ENCODE measurements at regions of chr7 and their contacts with region 1.

Region 1: DNA sequence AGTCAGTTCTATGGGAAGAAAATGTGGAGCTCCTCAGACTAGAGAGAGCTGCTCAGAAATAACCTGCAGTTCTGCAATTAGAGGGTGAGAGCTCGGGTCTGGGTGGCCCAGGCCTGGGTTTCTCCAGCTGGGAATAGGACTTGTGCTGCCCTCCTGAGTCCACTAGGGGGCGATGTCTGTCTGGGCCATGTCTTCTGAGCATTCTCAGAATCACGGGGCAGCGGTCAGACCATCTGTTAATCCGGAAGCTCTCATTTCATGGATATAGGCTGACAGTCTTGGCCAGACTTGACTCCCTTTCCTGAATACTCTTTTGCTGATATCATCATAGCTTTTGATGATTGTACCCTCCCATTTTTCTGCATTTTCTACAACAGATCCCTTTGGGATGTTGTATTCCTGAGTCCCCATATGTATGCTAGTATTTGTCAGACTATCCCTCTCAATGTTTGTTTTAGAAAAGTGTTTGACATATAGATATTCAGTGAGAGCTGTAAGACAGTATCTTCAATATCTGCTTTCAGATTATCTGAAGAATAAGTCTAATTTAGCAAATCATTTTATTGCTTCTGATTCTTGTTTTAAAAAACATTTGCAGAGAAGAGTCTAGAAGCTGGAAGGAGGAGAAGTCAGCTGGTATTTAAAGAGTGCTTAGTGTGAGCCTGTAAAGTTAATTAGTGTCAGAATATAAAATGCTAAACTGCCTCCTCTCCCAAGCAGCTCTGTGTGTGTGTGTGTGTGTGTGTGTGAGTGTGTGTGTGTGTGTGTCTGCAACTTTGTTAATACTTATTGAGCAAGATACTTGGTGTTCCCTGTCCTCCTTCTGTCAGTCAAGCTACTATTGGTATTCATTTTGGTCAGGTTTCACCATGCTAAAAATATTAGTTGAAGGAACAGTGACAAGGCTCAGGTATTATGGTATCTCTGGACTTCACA is 38.0 kb downstream of the STARD3NL start:
- H3K4me3 ChIP-seq: no peak overlapping the region
- H3K27ac ChIP-seq: no peak overlapping the region
- H3K4me1 ChIP-seq: peaks cover 2% of the 10 kb centered on the region; the same call in 1 of the 2 replicates
- CTCF ChIP-seq: peak; percentile 61

Region 2: GRCh38 chr7:38107486-38107893 is 108.5 kb before region 1 on chr7:
- CTCF ChIA-PET with region 1: interaction called, 53 read pairs
- POLR2A ChIA-PET with region 1: no interaction called
- H3K4me3 ChIP-seq: no peak overlapping the region
- H3K27ac ChIP-seq: no peak overlapping the region
- H3K4me1 ChIP-seq: no peaks in the 10 kb centered on the region
- CTCF ChIP-seq: no peak

Region 3: GRCh38 chr7:38178004-38178694 is 37.9 kb before region 1 on chr7 and contains the start of gene STARD3NL:
- CTCF ChIA-PET with region 1: interaction called, 23 read pairs
- POLR2A ChIA-PET with region 1: interaction called, 4 read pairs
- H3K4me3 ChIP-seq: peak within 1 kb of the TSS; percentile 78
- H3K27ac ChIP-seq: peak within 1 kb of the TSS; percentile 7; the same call in 1 of the 2 replicates
- H3K4me1 ChIP-seq: peaks cover 5% of the 10 kb centered on the region; the same call in 1 of the 2 replicates
- CTCF ChIP-seq: no peak; the same call in 1 of the 2 replicates

Region 4: DNA sequence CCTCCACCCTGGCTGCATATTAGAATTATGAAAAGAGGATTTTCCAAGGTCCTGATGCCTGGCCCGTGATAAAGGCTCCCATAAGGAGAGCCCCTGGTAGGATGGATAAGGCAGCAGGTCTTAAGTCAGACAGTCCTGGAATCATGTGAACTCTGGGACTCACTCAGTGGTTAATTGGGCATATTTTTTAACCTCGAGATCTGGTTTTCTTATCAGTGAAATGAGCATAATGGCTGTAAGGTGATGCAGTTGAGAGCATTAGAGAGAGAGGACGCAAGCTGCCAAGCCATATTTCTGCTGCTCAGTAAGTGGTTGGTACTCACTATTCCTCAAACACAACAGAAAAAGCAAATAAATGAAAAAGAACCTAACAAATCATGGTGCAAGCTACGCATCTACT is 19.6 kb after region 1 on chr7:
- CTCF ChIA-PET with region 1: interaction called, 10 read pairs
- POLR2A ChIA-PET with region 1: no interaction called
- H3K4me3 ChIP-seq: no peak overlapping the region
- H3K27ac ChIP-seq: no peak overlapping the region
- H3K4me1 ChIP-seq: no peaks in the 10 kb centered on the region
- CTCF ChIP-seq: no peak

Region 5: GRCh38 chr7:38318803-38319416 is 102.9 kb after region 1 on chr7:
- CTCF ChIA-PET with region 1: interaction called, 112 read pairs
- POLR2A ChIA-PET with region 1: no interaction called
- H3K4me3 ChIP-seq: no peak overlapping the region
- H3K27ac ChIP-seq: no peak overlapping the region
- H3K4me1 ChIP-seq: no peaks in the 10 kb centered on the region; the same call in 1 of the 2 replicates
- CTCF ChIP-seq: peak; percentile 75

Region 6: DNA sequence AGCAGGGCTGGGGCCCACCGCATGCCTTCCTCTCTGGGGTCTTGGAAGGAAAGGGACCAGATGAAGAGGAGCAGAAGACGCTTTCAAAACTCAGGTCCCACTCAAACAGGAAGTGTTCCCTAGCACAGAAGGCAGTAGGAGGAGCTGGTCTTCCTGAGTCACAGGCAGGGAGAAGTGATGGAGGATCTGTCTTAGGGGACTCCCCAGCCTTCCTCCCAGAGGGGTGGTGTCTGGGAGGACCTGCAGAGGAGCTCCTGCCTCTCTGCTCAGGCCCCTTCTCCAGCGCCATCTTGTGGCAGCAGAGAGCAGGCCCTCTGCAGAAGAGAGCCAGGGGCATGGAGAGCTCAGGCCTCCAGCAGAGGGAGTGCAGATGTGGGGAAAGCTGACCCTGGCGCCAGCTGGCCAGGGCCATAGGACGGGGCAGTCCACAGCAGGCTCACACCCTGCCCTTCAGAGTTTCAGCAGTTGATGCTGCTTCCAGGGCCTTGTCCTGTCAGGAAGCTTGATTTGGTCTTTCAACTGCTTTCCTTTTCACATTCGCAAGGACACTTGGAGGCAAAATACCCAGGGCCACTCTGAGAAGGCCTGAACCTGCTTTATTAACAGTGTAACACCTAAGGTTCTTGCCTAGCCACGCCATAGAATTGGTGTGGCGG is 119.6 kb after region 1 on chr7:
- CTCF ChIA-PET with region 1: interaction called, 87 read pairs
- POLR2A ChIA-PET with region 1: interaction called, 3 read pairs
- H3K4me3 ChIP-seq: no peak overlapping the region
- H3K27ac ChIP-seq: no peak overlapping the region
- H3K4me1 ChIP-seq: no peaks in the 10 kb centered on the region
- CTCF ChIP-seq: peak; percentile 77

Region 7: DNA sequence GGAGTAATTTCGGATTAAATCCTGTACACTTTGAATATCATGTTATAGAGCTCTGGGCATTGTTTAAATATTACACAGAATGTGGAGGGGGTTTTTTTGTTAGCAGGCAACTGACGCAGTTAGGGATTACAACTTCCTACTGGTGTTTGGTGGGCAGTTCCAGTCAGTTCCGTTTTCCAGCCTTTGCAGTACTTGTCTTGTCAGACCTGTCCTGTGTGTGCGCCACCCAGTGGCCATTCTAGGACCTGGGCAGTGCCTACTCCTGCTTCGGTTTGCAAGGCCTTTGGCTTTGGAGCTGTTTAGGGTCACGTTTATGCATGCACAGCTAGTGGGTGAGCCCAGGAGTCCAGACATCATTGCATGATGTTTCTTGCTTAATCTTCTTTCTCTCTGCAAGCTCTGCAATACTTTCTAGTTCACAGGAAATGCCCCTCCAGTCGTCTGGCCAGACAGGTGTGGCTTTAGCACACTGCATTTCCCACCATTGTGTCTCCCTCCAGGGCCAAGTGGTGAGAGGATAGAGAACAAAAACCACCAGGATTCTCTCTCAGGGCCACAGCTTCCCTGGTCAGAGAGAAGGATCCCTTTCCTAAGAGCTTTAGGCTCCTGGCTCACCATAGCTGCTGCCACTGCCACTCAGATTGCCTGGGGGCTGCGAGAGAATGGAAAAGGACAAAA is 154.0 kb after region 1 on chr7:
- CTCF ChIA-PET with region 1: interaction called, 21 read pairs
- POLR2A ChIA-PET with region 1: no interaction called
- H3K4me3 ChIP-seq: no peak overlapping the region
- H3K27ac ChIP-seq: no peak overlapping the region
- H3K4me1 ChIP-seq: no peaks in the 10 kb centered on the region
- CTCF ChIP-seq: no peak

Measured in HEK293 (cell line).